ENCODE measurements at regions of chr11 and their contacts with region 1.

Region 1: GRCh38 chr11:102341844-102342318 is 5.1 kb upstream of the BIRC2 start:
- DNase-seq: peak; percentile 45 to 89 (median 77)
- ATAC-seq: peak; percentile 22
- H3K4me3 ChIP-seq: no peak overlapping the region
- H3K4me3 Mint-ChIP-seq: no peak overlapping the region
- H3K27ac ChIP-seq: no peak overlapping the region
- H3K27ac Mint-ChIP-seq: peak overlapping the region; percentile 29
- H3K4me1 ChIP-seq: peaks cover 12% of the 10 kb centered on the region
- H3K4me1 Mint-ChIP-seq: peaks cover 17% of the 10 kb centered on the region
- H3K27me3 ChIP-seq: no peaks in the 10 kb centered on the region
- H3K27me3 Mint-ChIP-seq: no peaks in the 10 kb centered on the region
- CTCF ChIP-seq: peak; percentile 74

Region 2: DNA sequence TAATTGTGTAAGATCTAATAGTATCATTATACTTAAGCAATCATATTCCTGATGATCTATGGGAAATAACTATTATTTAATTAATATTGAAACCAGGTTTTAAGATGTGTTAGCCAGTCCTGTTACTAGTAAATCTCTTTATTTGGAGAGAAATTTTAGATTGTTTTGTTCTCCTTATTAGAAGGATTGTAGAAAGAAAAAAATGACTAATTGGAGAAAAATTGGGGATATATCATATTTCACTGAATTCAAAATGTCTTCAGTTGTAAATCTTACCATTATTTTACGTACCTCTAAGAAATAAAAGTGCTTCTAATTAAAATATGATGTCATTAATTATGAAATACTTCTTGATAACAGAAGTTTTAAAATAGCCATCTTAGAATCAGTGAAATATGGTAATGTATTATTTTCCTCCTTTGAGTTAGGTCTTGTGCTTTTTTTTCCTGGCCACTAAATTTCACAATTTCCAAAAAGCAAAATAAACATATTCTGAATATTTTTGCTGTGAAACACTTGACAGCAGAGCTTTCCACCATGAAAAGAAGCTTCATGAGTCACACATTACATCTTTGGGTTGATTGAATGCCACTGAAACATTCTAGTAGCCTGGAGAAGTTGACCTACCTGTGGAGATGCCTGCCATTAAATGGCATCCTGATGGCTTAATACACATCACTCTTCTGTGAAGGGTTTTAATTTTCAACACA is 18.2 kb before region 1 on chr11:
- CTCF ChIA-PET with region 1: interaction called, 10 read pairs
- POLR2A ChIA-PET with region 1: interaction called, 3 read pairs
- intact Hi-C with region 1: loop called in 1 of 2 experiments (anchors 2 kb)
- DNase-seq: no peak
- ATAC-seq: no peak
- H3K4me3 ChIP-seq: no peak overlapping the region
- H3K4me3 Mint-ChIP-seq: no peak overlapping the region
- H3K27ac ChIP-seq: no peak overlapping the region
- H3K27ac Mint-ChIP-seq: peak overlapping the region; percentile 18
- H3K4me1 ChIP-seq: peaks cover 42% of the 10 kb centered on the region
- H3K4me1 Mint-ChIP-seq: peaks cover 57% of the 10 kb centered on the region
- H3K27me3 ChIP-seq: no peaks in the 10 kb centered on the region
- H3K27me3 Mint-ChIP-seq: no peaks in the 10 kb centered on the region
- CTCF ChIP-seq: no peak

Region 3: DNA sequence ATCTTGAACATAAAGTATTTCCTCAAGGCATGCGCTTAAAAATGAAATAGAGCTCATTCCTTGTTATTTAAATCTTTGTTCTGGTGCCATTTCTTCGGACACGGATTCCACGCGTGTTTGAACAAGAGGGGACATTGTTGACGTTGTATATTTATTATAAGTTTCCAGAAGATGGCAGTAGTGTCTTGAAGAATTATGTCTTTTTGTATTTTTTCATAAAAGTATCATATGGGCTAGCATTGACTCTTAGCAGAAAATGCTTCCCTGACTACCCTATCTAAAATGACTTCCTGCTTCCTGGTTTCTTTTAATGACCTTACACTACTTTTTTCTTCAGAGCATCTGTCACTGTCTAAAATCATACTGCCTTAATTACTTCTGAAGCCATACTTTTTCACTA is 25.5 kb after region 1 on chr11:
- CTCF ChIA-PET with region 1: interaction called, 20 read pairs
- POLR2A ChIA-PET with region 1: interaction called, 3 read pairs
- intact Hi-C with region 1: no loop called
- DNase-seq: peak in 2 of 9 experiments; percentile 41 to 61
- ATAC-seq: peak; percentile 77
- H3K4me3 ChIP-seq: no peak overlapping the region
- H3K4me3 Mint-ChIP-seq: no peak overlapping the region
- H3K27ac ChIP-seq: no peak overlapping the region
- H3K27ac Mint-ChIP-seq: peak overlapping the region; percentile 66
- H3K4me1 ChIP-seq: peaks cover 22% of the 10 kb centered on the region
- H3K4me1 Mint-ChIP-seq: peaks cover 42% of the 10 kb centered on the region
- H3K27me3 ChIP-seq: no peaks in the 10 kb centered on the region
- H3K27me3 Mint-ChIP-seq: no peaks in the 10 kb centered on the region
- CTCF ChIP-seq: peak; percentile 70

Region 4: DNA sequence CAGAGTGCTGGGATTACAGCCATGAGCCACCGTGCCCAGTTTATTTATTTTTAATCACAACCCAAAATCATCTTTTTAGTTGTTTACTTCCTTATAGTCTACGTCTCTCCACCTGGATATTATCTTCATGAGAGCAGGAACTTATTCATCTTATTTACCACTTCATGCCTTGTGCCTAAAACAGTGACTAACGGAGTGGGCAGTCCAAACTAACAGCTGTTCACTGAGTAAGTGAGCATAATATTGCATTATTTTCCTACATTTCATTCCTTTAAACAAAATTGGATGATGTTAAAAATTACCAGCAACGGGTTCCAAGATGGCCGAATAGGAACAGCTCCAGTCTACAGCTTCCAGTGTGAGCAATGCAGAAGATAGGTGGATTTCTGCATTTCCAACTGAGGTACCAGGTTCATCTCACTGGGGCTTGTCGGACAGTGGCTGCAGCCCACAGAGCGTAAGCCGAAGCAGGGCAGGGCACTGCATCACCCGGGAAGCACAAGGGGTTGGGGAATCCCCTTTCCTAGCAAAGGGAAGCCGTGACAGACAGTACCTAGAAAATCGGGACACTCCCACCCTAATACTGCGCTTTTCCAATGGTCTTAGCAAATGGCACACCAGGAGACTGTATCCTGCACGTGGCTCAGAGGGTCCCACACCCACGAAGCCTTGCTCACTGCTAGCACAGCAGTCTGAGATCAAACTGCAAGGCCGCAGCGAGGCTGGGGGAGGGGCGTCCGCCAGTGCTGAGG is 96.6 kb after region 1 on chr11:
- CTCF ChIA-PET with region 1: interaction called, 11 read pairs
- POLR2A ChIA-PET with region 1: no interaction called
- intact Hi-C with region 1: no loop called
- DNase-seq: peak in 5 of 9 experiments; percentile 31 to 76 (median 56)
- ATAC-seq: no peak
- H3K4me3 ChIP-seq: no peak overlapping the region
- H3K4me3 Mint-ChIP-seq: peak overlapping the region; percentile 67
- H3K27ac ChIP-seq: no peak overlapping the region
- H3K27ac Mint-ChIP-seq: peak overlapping the region; percentile 84
- H3K4me1 ChIP-seq: peaks cover 34% of the 10 kb centered on the region
- H3K4me1 Mint-ChIP-seq: peaks cover 88% of the 10 kb centered on the region
- H3K27me3 ChIP-seq: no peaks in the 10 kb centered on the region
- H3K27me3 Mint-ChIP-seq: no peaks in the 10 kb centered on the region
- CTCF ChIP-seq: no peak

Region 5: DNA sequence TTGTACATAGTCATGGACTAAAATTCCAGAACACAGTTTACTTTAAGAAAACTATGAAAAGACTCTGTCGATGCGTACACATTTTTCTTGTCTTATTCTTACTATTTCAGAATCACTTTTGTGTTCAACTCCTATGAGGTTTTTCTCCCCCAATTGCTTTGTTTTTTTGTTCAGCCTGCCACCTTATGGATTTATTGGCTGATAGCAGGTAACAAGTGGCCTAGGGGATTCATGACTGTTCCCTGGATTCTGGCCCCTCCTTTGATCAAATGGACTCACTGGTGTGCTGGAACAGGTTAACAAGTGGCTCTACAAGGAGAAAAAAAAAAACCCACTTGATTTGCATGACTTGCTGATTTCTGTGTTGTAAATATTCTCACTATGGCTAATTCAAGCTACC is 272.6 kb after region 1 on chr11:
- CTCF ChIA-PET with region 1: interaction called, 47 read pairs
- POLR2A ChIA-PET with region 1: interaction called, 3 read pairs
- intact Hi-C with region 1: loop called (anchors 1 kb)
- DNase-seq: peak in 1 of 9 experiments; percentile 9
- ATAC-seq: no peak
- H3K4me3 ChIP-seq: no peak overlapping the region
- H3K4me3 Mint-ChIP-seq: no peak overlapping the region
- H3K27ac ChIP-seq: no peak overlapping the region
- H3K27ac Mint-ChIP-seq: no peak overlapping the region
- H3K4me1 ChIP-seq: no peaks in the 10 kb centered on the region
- H3K4me1 Mint-ChIP-seq: peaks cover 3% of the 10 kb centered on the region
- H3K27me3 ChIP-seq: no peaks in the 10 kb centered on the region
- H3K27me3 Mint-ChIP-seq: no peaks in the 10 kb centered on the region
- CTCF ChIP-seq: no peak